ENCODE measurements at regions of chr15 and their contacts with region 1.

Region 1: GRCh38 chr15:56245871-56246814 is 2.5 kb upstream of the RFX7 start:
- DNase-seq: peak; percentile 58 to 88
- H3K4me3 ChIP-seq: peak overlapping the region; percentile 58; the same call in 1 of the 2 replicates
- H3K27ac ChIP-seq: 0 out of 2 replicates have a peak overlapping the region, but pooled peaks have one; percentile 20
- H3K4me1 ChIP-seq: peaks cover 38% of the 10 kb centered on the region
- H3K27me3 ChIP-seq: no peaks in the 10 kb centered on the region
- CTCF ChIP-seq: peak; percentile 92

Region 2: GRCh38 chr15:55649054-55649423 is 597.1 kb before region 1 on chr15:
- CTCF ChIA-PET with region 1: no interaction called
- POLR2A ChIA-PET with region 1: no interaction called
- intact Hi-C with region 1: loop called (anchors 2 kb)
- DNase-seq: no peak
- H3K4me3 ChIP-seq: no peak overlapping the region
- H3K27ac ChIP-seq: no peak overlapping the region
- H3K4me1 ChIP-seq: no peaks in the 10 kb centered on the region
- H3K27me3 ChIP-seq: no peaks in the 10 kb centered on the region
- CTCF ChIP-seq: no peak

Region 3: DNA sequence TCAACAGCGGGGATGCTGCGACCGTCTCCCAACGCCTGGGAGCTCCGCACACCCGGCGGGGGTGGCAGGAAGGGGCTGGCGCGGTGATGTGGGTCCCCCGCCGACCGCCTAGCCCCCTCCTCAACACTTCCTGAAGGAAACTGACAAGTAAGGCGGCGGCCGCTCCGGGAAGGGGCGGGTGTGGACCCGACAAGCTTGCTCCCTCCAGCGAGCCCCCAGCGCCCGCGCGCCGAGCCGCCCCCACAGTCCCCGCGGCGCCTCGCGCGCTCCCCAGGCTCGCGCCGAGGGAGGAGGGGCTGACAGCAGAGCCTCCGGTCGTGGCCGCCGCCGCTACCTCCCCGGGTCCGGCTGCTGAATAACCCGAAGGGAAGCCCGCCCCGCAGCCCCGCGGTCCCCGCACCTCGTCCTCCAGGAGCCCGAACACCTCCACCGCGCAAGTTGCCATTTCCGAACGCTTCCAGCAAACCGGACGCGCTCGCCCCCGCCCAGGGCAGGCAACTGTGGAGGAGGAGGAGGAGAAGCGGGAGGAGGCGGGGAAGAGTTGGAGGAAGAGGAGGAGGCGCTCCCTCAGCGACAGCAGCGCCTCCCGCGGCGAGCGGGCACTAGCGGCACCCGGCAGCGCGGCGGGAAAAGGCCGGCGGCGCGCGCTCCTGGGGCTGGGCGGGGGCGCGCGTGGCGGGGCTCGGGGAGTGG is 252.9 kb before region 1 on chr15 and contains the start of gene NEDD4:
- CTCF ChIA-PET with region 1: interaction called, 7 read pairs
- POLR2A ChIA-PET with region 1: no interaction called
- intact Hi-C with region 1: loop called (anchors 10 kb)
- DNase-seq: peak; percentile 52 to 87
- H3K4me3 ChIP-seq: peak within 1 kb of the TSS; percentile 81
- H3K27ac ChIP-seq: peak within 1 kb of the TSS; percentile 26; the same call in 1 of the 2 replicates
- H3K4me1 ChIP-seq: peaks cover 14% of the 10 kb centered on the region
- H3K27me3 ChIP-seq: no peaks in the 10 kb centered on the region
- CTCF ChIP-seq: no peak
- total RNA-seq, gene NEDD4: 17.8 and 24.5 TPM in 2 replicates

Region 4: DNA sequence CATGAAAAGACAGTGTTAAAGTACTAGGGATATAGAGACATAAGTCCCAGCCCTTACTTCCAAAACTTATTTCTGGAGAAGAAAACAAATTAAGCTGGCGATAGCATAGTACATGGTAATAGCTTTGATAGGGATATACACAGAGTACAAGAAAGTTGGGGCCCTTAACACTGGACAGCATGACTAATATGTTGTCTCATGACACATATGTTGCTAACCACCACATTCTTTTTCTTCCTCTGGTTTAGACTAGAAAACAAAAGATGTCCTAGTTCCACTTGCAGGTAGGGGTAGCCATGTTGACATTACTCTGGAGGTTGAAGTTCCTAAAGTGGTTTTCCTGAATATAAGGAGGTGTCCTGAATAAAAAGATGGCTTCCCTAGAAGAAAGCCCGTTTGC is 77.7 kb before region 1 on chr15:
- CTCF ChIA-PET with region 1: no interaction called
- POLR2A ChIA-PET with region 1: no interaction called
- intact Hi-C with region 1: no loop called
- DNase-seq: no peak
- H3K4me3 ChIP-seq: no peak overlapping the region
- H3K27ac ChIP-seq: no peak overlapping the region
- H3K4me1 ChIP-seq: no peaks in the 10 kb centered on the region
- H3K27me3 ChIP-seq: no peaks in the 10 kb centered on the region
- CTCF ChIP-seq: no peak

Region 5: DNA sequence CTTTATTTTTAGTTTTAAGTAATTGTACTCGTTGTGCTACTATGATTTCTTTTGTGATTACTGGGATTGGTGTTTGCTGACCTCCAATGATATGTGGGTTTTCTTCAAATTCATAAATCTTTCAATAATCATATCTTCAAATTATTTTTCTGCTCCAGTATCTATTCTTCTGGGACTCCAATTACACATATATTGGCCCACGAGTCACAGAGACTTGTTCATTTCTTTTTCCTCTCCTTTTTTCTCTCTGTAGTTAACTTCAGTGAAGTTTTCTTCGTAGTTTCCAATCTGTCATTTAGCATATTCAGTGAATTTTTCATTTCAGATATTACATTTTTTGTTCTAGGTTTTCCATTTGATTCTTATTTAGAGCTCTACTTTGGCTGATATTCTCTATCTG is 23.8 kb before region 1 on chr15:
- CTCF ChIA-PET with region 1: no interaction called
- POLR2A ChIA-PET with region 1: no interaction called
- intact Hi-C with region 1: no loop called
- DNase-seq: no peak
- H3K4me3 ChIP-seq: no peak overlapping the region
- H3K27ac ChIP-seq: no peak overlapping the region
- H3K4me1 ChIP-seq: no peaks in the 10 kb centered on the region
- H3K27me3 ChIP-seq: no peaks in the 10 kb centered on the region
- CTCF ChIP-seq: no peak

Region 6: GRCh38 chr15:56327701-56328452 is 81.7 kb after region 1 on chr15:
- CTCF ChIA-PET with region 1: no interaction called
- POLR2A ChIA-PET with region 1: no interaction called
- intact Hi-C with region 1: loop called (anchors 2 kb)
- DNase-seq: peak; percentile 47 to 78
- H3K4me3 ChIP-seq: no peak overlapping the region
- H3K27ac ChIP-seq: no peak overlapping the region
- H3K4me1 ChIP-seq: no peaks in the 10 kb centered on the region
- H3K27me3 ChIP-seq: no peaks in the 10 kb centered on the region
- CTCF ChIP-seq: no peak

Region 7: DNA sequence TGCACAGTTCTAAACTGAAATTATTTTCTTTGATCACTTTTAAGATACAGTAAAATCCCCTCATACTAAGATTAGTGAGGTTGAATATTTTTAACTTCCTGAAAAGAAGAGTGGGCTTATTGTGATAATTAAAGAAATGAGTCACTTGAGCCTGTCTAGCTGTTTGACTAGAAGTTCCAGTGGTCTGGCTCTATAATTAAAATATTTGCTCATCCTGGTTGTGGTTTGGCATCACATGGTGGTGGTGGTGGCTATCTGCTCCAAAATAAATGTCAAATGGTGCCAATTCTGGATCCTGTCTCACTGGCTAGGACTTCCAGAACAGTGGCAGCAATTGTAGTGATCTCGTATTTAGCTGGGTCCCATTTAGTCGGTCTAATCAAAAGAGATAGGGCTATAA is 110.5 kb after region 1 on chr15:
- CTCF ChIA-PET with region 1: no interaction called
- POLR2A ChIA-PET with region 1: no interaction called
- intact Hi-C with region 1: no loop called
- DNase-seq: peak; percentile 4 to 50
- H3K4me3 ChIP-seq: no peak overlapping the region
- H3K27ac ChIP-seq: no peak overlapping the region
- H3K4me1 ChIP-seq: peaks cover 9% of the 10 kb centered on the region
- H3K27me3 ChIP-seq: no peaks in the 10 kb centered on the region
- CTCF ChIP-seq: no peak

Region 8: GRCh38 chr15:56428821-56429458 is 182.8 kb after region 1 on chr15:
- CTCF ChIA-PET with region 1: interaction called, 3 read pairs
- POLR2A ChIA-PET with region 1: interaction called, 4 read pairs
- intact Hi-C with region 1: loop called (anchors 1 kb)
- DNase-seq: no peak
- H3K4me3 ChIP-seq: no peak overlapping the region
- H3K27ac ChIP-seq: no peak overlapping the region
- H3K4me1 ChIP-seq: no peaks in the 10 kb centered on the region
- H3K27me3 ChIP-seq: no peaks in the 10 kb centered on the region
- CTCF ChIP-seq: peak; percentile 65